T-cell (primary cell): ENCODE measurements at regions of chr11 and their contacts with region 1.

Region 1: DNA sequence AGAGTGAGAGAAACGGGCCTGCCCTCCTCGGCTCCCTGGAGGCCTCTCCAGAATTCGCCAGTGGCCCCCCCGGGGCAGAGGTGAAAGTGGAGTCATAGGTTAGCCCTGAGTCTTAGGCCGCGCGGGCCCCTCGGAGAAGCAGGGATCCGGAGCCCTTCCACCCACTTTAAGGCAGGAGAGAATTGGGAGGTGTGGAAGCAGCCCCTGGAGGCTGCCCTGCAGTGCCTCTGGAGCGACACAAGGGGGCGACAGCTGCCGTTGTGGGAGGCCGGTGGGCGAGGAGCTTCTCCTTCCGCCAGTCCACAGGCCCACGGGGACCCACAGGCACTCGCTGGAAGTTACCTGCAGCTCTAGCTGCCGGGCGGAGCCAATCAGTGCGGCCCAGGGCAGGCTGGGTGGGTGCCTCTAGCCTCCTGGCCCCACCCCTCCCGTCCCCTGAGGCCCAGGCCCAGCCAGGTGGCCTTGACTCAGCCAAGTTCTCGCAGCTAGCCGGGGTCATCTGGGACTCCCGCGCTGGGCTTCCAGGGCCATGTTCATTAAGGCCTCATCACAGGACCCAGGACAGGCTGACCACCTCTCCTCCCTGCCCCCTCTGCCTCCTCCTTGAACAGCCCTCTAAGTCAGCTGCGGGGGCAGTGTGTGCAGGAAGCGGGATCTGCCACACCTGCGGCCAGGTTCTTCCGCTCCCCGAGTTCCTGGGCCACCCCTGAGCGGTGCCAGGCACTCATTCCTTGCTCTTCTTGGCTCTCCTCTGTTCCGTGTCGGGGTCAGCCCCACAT is 5.0 kb downstream of the DGKZ start:
- DNase-seq: peak; percentile 54 to 90 (median 75)
- ATAC-seq: peak; percentile 29 to 71 (median 38)
- H3K4me3 ChIP-seq: peak overlapping the region; percentile 42 to 52
- H3K4me3 Mint-ChIP-seq: peak overlapping the region; percentile 74 to 85 (median 78)
- H3K27ac ChIP-seq: peak overlapping the region; percentile 66
- H3K27ac Mint-ChIP-seq: peak overlapping the region; percentile 93 to 98
- H3K4me1 ChIP-seq: peaks cover 53 to 92% of the 10 kb centered on the region in 2 experiments
- H3K4me1 Mint-ChIP-seq: peaks cover 78 to 85% (median 84%) of the 10 kb centered on the region in 3 donors
- H3K27me3 ChIP-seq: no peaks in the 10 kb centered on the region
- H3K27me3 Mint-ChIP-seq: no peaks in the 10 kb centered on the region

Region 2: GRCh38 chr11:46367244-46367915 is 15.1 kb after region 1 on chr11:
- CTCF ChIA-PET with region 1: interaction called, 12 to 18 read pairs
- POLR2A ChIA-PET with region 1: no interaction called
- DNase-seq: peak; percentile 42 to 88 (median 72)
- ATAC-seq: peak; percentile 86 to 92 (median 90)
- H3K4me3 ChIP-seq: no peak overlapping the region
- H3K4me3 Mint-ChIP-seq: no peak overlapping the region
- H3K27ac ChIP-seq: peak overlapping the region; percentile 23
- H3K27ac Mint-ChIP-seq: peak overlapping the region in 1 of 2 donors; percentile 69
- H3K4me1 ChIP-seq: peaks cover 8 to 63% of the 10 kb centered on the region in 2 experiments
- H3K4me1 Mint-ChIP-seq: peaks cover 46 to 55% (median 55%) of the 10 kb centered on the region in 3 donors
- H3K27me3 ChIP-seq: no peaks in the 10 kb centered on the region
- H3K27me3 Mint-ChIP-seq: no peaks in the 10 kb centered on the region

Region 3: DNA sequence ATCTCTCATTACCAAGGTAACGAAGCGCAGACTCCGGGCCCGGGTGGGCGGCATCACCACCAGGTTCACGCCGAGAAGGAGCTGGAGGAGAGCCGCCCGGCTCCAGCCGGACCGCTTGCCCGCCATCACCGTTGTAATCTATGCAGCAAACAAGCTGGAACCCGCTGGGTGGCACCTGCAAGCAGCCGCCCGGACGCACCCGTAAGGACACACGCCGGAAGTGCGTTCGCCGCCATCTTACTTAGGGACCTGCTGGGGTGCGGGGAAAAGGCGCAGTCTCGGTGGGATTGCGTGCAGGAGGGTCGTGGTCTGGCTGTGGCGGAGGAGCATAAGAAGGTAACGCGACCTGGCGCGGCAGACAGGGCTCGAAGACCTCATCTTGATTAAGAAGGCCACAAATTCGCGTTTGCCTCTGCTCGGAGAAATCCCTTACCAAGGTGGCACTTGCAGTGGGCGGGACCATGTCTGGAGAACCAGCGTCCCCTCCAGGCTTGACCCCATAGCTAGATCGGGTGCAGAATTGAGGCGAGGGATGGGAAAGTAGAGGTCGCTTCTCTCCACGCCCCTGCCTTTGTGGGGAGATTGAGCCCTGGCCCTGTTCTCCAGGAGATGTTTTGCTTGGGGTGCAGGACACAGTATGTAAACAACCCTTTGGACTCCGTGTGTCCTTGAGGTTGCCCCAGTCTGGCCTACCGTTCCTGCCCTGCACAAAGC is 896.6 kb after region 1 on chr11 and contains the start of gene ACP2:
- CTCF ChIA-PET with region 1: no interaction called
- POLR2A ChIA-PET with region 1: interaction called in 1 of 2 experiments, 11 read pairs
- DNase-seq: peak; percentile 69 to 91 (median 81)
- ATAC-seq: peak; percentile 96 to 98 (median 97)
- H3K4me3 ChIP-seq: peak within 1 kb of the TSS; percentile 89 to 90
- H3K4me3 Mint-ChIP-seq: peak within 1 kb of the TSS; percentile 88 to 98 (median 96)
- H3K27ac ChIP-seq: peak within 1 kb of the TSS; percentile 66
- H3K27ac Mint-ChIP-seq: peak within 1 kb of the TSS; percentile 96 to 99
- H3K4me1 ChIP-seq: peaks cover 5 to 24% of the 10 kb centered on the region in 2 experiments
- H3K4me1 Mint-ChIP-seq: peaks cover 15 to 30% (median 28%) of the 10 kb centered on the region in 3 donors
- H3K27me3 ChIP-seq: no peaks in the 10 kb centered on the region
- H3K27me3 Mint-ChIP-seq: no peaks in the 10 kb centered on the region
- total RNA-seq, gene ACP2: 16.2 to 26.8 (median 21.9) TPM